ENCODE measurements at regions of chr1 and their contacts with region 1.

Region 1: DNA sequence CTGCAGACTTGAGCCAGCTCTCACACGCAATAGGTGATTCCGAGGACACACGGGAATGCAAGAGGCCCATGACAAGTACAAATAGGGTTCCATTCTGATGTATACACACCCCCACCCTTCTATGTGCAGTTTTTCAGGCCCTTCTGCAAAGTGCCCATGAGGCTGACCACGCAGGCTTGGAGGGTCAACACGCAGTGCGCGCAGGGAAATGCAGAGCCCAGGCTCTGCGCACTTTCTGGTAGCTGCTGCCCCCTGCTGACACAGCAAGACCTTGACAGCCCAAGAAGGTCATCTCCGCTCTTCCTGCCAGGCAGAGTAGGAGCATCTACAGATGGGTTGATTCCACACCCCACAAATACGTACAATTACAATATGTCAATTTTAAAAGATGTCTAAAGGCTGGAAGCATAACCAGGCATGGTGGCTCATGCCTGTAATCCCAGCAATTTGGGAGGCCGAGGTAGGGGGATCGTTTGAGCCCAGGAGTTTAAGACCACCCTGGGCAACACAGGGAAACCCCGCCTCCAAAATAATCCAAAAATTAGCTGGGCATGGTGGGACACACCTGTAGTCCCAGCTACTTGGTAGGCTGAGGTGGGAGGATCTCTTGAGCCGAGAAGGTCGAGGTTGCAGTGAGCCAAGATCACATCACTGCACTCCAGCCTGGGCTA is 18.5 kb downstream of the SH3BP5L start:
- DNase-seq: peak; percentile 18 to 65 (median 48)
- ATAC-seq: peak; percentile 87
- H3K4me3 ChIP-seq: no peak overlapping the region
- H3K4me3 Mint-ChIP-seq: no peak overlapping the region
- H3K27ac ChIP-seq: no peak overlapping the region
- H3K27ac Mint-ChIP-seq: no peak overlapping the region
- H3K4me1 ChIP-seq: peaks cover 3% of the 10 kb centered on the region
- H3K4me1 Mint-ChIP-seq: peaks cover 16% of the 10 kb centered on the region
- H3K27me3 ChIP-seq: peaks cover 0 to 2% of the 10 kb centered on the region in 2 experiments
- H3K27me3 Mint-ChIP-seq: peaks cover 7% of the 10 kb centered on the region
- CTCF ChIP-seq: peak; percentile 79

Region 2: DNA sequence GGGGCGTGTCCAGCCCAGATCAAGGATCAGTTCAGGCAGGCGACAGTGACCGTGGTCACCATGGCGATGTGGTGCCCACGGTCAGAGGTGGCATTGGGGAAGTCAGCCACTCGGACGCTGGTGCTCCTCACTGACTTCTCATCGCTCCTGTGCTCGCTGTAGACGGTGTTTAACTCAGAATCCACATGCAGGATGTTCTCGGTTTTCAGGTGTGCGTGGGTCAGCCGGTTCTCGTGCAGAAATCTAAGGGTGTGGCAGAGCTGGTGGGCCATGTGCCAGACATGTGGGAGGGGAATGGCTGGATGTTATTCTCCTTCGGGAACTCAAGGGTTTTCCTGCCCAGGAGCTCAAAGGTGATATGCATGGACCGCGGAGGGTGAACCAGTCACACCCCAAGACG is 870.8 kb before region 1 on chr1:
- CTCF ChIA-PET with region 1: no interaction called
- POLR2A ChIA-PET with region 1: no interaction called
- intact Hi-C with region 1: loop called in 1 of 2 experiments (anchors 1 kb)
- DNase-seq: peak in 1 of 9 experiments; percentile 2
- ATAC-seq: no peak
- H3K4me3 ChIP-seq: no peak overlapping the region
- H3K4me3 Mint-ChIP-seq: peak overlapping the region; percentile 88
- H3K27ac ChIP-seq: no peak overlapping the region
- H3K27ac Mint-ChIP-seq: no peak overlapping the region
- H3K4me1 ChIP-seq: no peaks in the 10 kb centered on the region
- H3K4me1 Mint-ChIP-seq: no peaks in the 10 kb centered on the region
- H3K27me3 ChIP-seq: no peaks in the 10 kb centered on the region
- H3K27me3 Mint-ChIP-seq: peaks cover 6% of the 10 kb centered on the region
- CTCF ChIP-seq: no peak

Region 3: DNA sequence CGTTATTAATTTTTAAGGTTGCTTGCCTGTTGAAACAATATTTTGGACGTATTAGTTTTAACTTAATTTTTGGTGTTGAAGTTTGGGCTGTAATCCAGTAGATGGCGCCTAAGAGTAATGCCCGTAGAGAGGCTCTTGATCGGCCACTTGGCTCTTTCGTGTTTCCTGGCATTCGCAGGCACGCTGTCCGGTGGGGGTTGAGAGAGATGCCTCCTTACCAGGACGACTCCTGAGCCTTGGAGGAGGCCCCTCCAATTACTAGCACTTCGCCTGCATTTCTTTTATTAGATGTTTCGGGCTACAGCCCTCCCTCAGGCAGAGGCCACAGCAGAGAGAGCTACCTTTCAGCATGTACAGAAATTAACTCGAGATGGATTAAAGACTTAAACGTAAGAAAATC is 564.0 kb before region 1 on chr1:
- CTCF ChIA-PET with region 1: interaction called, 22 read pairs
- POLR2A ChIA-PET with region 1: no interaction called
- intact Hi-C with region 1: loop called in 1 of 2 experiments (anchors 1 kb)
- DNase-seq: peak in 5 of 9 experiments; percentile 5 to 51 (median 14)
- ATAC-seq: no peak
- H3K4me3 ChIP-seq: no peak overlapping the region
- H3K4me3 Mint-ChIP-seq: peak overlapping the region; percentile 51
- H3K27ac ChIP-seq: no peak overlapping the region
- H3K27ac Mint-ChIP-seq: no peak overlapping the region
- H3K4me1 ChIP-seq: no peaks in the 10 kb centered on the region
- H3K4me1 Mint-ChIP-seq: peaks cover 2% of the 10 kb centered on the region
- H3K27me3 ChIP-seq: no peaks in the 10 kb centered on the region
- H3K27me3 Mint-ChIP-seq: peaks cover 12% of the 10 kb centered on the region
- CTCF ChIP-seq: peak; percentile 72

Region 4: GRCh38 chr1:248404024-248404423 is 403.2 kb before region 1 on chr1:
- CTCF ChIA-PET with region 1: interaction called, 5 read pairs
- POLR2A ChIA-PET with region 1: no interaction called
- intact Hi-C with region 1: loop called in 1 of 2 experiments (anchors 1 kb)
- DNase-seq: peak in 1 of 9 experiments; percentile 32
- ATAC-seq: no peak
- H3K4me3 ChIP-seq: no peak overlapping the region
- H3K4me3 Mint-ChIP-seq: no peak overlapping the region
- H3K27ac ChIP-seq: no peak overlapping the region
- H3K27ac Mint-ChIP-seq: no peak overlapping the region
- H3K4me1 ChIP-seq: no peaks in the 10 kb centered on the region
- H3K4me1 Mint-ChIP-seq: peaks cover 5% of the 10 kb centered on the region
- H3K27me3 ChIP-seq: no peaks in the 10 kb centered on the region
- H3K27me3 Mint-ChIP-seq: no peaks in the 10 kb centered on the region
- CTCF ChIP-seq: no peak

Region 5: DNA sequence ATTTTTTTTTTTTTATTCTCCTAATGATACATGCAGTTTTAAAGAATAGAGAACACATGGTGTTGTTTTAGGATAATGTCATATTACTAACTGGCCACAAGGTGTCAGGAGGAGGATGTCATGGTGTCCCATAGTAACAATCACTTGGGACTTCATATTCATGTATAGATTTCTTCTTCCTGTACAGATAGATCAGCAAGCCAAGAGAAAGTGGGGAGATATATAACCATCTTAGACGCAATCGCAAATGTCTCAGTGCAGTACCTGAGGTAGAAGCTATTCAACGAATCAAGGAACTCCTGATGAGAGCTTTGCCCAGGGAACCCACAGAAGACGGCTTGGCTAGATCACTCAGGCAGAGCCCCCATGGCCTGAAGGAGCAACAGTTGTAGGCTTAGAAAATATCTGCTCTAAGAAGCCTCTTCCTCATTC is 184.6 kb before region 1 on chr1:
- CTCF ChIA-PET with region 1: interaction called, 14 read pairs
- POLR2A ChIA-PET with region 1: no interaction called
- intact Hi-C with region 1: loop called (anchors 1 to 2 kb)
- DNase-seq: peak in 2 of 9 experiments; percentile 34 to 35
- ATAC-seq: peak; percentile 59
- H3K4me3 ChIP-seq: no peak overlapping the region
- H3K4me3 Mint-ChIP-seq: no peak overlapping the region
- H3K27ac ChIP-seq: no peak overlapping the region
- H3K27ac Mint-ChIP-seq: no peak overlapping the region
- H3K4me1 ChIP-seq: no peaks in the 10 kb centered on the region
- H3K4me1 Mint-ChIP-seq: peaks cover 3% of the 10 kb centered on the region
- H3K27me3 ChIP-seq: no peaks in the 10 kb centered on the region
- H3K27me3 Mint-ChIP-seq: no peaks in the 10 kb centered on the region
- CTCF ChIP-seq: peak; percentile 67